ENCODE measurements at regions of chr2 and their contacts with region 1.

Region 1: GRCh38 chr2:3536682-3537632 is 17.6 kb upstream of the ADI1 start:
- DNase-seq: peak; percentile 15
- H3K4me3 Mint-ChIP-seq: peak overlapping the region; percentile 66
- H3K27ac Mint-ChIP-seq: peak overlapping the region; percentile 95
- H3K4me1 Mint-ChIP-seq: peaks cover 15% of the 10 kb centered on the region
- H3K27me3 Mint-ChIP-seq: no peaks in the 10 kb centered on the region
- CTCF ChIP-seq: no peak

Region 2: GRCh38 chr2:3500326-3500899 is 36.5 kb before region 1 on chr2:
- CTCF ChIA-PET with region 1: no interaction called
- POLR2A ChIA-PET with region 1: no interaction called
- intact Hi-C with region 1: no loop called
- DNase-seq: no peak
- H3K4me3 Mint-ChIP-seq: no peak overlapping the region
- H3K27ac Mint-ChIP-seq: no peak overlapping the region
- H3K4me1 Mint-ChIP-seq: no peaks in the 10 kb centered on the region
- H3K27me3 Mint-ChIP-seq: no peaks in the 10 kb centered on the region
- CTCF ChIP-seq: no peak

Region 3: GRCh38 chr2:3651691-3652648 is 115.0 kb after region 1 on chr2:
- CTCF ChIA-PET with region 1: interaction called, 16 read pairs
- POLR2A ChIA-PET with region 1: no interaction called
- intact Hi-C with region 1: loop called (anchors 5 kb)
- DNase-seq: no peak
- H3K4me3 Mint-ChIP-seq: no peak overlapping the region
- H3K27ac Mint-ChIP-seq: no peak overlapping the region
- H3K4me1 Mint-ChIP-seq: peaks cover 7% of the 10 kb centered on the region
- H3K27me3 Mint-ChIP-seq: no peaks in the 10 kb centered on the region
- CTCF ChIP-seq: no peak

Measured in MCF 10A (cell line).